Activated CD4-positive, alpha-beta T cell treated with anti-CD3 and anti-CD28 coated beads for 36 hours (primary cell): ENCODE measurements at regions of chr10 and their contacts with region 1.

Region 1: GRCh38 chr10:52215745-52216361 is 98.2 kb upstream of the DKK1 start:
- DNase-seq: peak; percentile 52
- ATAC-seq: peak; percentile 74
- H3K4me3 Mint-ChIP-seq: no peak overlapping the region
- H3K27ac Mint-ChIP-seq: no peak overlapping the region
- H3K4me1 Mint-ChIP-seq: no peaks in the 10 kb centered on the region
- H3K27me3 Mint-ChIP-seq: no peaks in the 10 kb centered on the region

Region 2: DNA sequence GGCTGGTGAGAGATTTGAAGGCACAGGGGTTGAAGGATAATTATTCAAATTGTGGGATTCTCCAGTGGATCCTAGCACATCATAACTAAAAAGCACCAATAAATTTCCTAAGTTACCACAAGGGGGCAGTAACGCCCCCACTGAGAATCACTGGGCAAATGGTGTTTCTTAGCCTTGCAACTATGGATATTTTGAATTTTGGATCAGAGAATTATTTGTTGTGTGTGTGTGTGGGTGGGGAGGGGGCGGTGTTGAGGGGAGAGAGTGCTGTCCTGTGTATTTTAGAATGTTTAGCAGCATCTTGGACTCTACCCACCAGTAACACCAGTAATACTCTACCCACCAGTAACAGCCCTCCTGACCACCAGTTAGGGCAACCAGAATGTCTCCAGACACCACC is 1204.9 kb before region 1 on chr10:
- CTCF ChIA-PET with region 1: interaction called, 5 read pairs
- POLR2A ChIA-PET with region 1: no interaction called
- intact Hi-C with region 1: loop called (anchors 2 to 5 kb)
- DNase-seq: peak; percentile 21
- ATAC-seq: peak; percentile 42
- H3K4me3 Mint-ChIP-seq: no peak overlapping the region
- H3K27ac Mint-ChIP-seq: no peak overlapping the region
- H3K4me1 Mint-ChIP-seq: no peaks in the 10 kb centered on the region
- H3K27me3 Mint-ChIP-seq: peaks cover 15% of the 10 kb centered on the region

Region 3: DNA sequence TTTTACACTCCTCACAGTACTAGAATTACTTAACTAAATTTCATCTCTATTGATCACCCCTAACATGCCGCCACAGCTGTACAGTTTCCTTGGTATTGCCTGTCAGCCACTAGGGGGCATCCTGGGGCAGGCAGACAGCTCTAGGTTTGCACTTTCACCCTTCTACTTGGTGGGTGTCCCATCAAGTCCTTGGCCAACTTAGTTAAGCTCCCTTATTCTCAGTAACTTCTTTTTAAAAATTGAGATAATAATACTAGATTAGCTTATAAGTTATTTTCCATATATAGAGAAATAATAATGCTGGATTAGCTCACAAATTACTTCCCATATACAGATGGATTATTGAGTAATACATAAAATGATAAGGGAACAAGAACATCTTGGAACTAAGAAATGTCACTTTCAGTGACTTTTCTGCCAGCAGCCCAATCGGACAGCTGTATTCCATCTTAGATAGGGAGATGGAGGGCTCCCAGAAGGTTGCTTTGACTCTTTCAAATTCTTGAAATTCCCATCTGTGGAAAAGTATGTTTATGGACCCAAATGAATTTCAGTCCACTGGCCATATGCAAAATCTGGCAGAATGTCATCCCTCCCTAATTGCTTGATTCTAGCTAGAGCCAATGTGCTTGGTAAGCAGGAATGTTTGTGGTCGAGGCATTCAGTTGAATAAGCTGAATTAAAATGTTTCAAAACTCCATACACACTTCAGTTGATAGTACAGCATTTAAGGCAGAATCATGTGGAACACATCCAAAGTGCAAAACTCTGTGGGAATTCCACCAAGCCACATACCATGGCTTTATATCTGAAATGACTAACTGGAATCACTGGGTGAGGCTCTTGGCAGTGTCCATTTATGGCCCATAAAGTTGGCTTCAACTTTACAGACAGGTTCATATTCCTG is 826.2 kb before region 1 on chr10:
- CTCF ChIA-PET with region 1: interaction called, 13 read pairs
- POLR2A ChIA-PET with region 1: no interaction called
- intact Hi-C with region 1: loop called (anchors 2 kb)
- DNase-seq: peak; percentile 73
- ATAC-seq: peak; percentile 74
- H3K4me3 Mint-ChIP-seq: no peak overlapping the region
- H3K27ac Mint-ChIP-seq: no peak overlapping the region
- H3K4me1 Mint-ChIP-seq: no peaks in the 10 kb centered on the region
- H3K27me3 Mint-ChIP-seq: no peaks in the 10 kb centered on the region

Region 4: DNA sequence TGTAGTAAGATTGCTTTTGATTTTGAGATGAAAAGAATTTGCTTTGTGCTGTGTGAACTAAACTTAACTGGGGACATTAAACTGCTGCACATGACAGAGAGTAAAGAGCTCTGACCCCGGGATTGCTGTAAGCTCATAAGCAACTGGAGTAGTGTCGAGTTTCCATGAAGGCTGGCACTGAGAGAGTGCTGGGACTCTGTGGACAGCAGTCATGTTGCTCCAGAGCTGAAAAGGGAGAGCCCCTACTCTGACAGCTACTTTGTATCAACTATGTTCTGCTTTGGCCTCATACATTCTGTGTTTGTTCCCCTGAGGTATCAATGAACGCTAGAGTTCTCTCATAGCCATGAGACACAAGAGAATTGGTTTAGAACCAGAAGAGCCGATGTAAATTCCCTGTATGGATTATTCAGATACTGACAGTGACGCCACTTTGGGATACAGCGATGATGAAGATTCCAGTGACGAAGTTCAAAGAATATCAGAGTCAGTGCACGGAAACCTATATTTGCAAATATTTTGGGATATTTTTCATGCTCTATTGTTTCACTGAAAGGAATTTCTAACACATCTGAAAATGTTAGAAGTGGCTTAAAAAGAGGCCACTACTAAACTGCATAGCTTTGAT is 87.7 kb before region 1 on chr10:
- CTCF ChIA-PET with region 1: no interaction called
- POLR2A ChIA-PET with region 1: no interaction called
- intact Hi-C with region 1: no loop called
- DNase-seq: no peak
- ATAC-seq: no peak
- H3K4me3 Mint-ChIP-seq: no peak overlapping the region
- H3K27ac Mint-ChIP-seq: no peak overlapping the region
- H3K4me1 Mint-ChIP-seq: no peaks in the 10 kb centered on the region
- H3K27me3 Mint-ChIP-seq: no peaks in the 10 kb centered on the region